ENCODE measurements at regions of chr20 and their contacts with region 1.

Region 1: DNA sequence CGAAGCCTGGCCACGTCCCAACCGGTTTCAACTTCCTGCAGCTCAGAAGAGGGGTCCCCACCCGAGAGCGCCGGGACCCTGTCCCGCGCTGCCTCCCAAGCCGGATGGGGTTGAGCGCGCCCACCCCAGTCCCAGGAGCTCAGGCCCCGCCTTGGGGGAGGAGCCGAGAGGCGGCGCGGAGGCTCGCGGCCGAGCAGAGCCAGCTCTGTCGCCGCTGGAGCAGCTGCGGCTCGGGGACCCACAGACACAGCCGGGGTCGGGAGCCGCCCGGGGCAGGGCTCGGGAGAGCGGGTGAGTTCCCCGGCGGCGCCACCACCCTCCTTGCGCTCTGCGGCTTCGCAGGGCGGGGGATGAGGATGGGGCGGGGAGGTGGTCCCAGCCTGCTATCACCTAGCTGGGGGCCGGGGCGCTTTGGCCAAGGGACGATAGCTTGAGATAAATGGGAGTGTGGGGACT is at the start of gene PPP1R16B:
- DNase-seq: peak; percentile 89
- H3K4me3 Mint-ChIP-seq: peak within 1 kb of the TSS; percentile 87
- H3K27ac Mint-ChIP-seq: peak within 1 kb of the TSS; percentile 99
- H3K4me1 Mint-ChIP-seq: peaks cover 69% of the 10 kb centered on the region
- H3K27me3 Mint-ChIP-seq: peaks cover 4% of the 10 kb centered on the region

Region 2: DNA sequence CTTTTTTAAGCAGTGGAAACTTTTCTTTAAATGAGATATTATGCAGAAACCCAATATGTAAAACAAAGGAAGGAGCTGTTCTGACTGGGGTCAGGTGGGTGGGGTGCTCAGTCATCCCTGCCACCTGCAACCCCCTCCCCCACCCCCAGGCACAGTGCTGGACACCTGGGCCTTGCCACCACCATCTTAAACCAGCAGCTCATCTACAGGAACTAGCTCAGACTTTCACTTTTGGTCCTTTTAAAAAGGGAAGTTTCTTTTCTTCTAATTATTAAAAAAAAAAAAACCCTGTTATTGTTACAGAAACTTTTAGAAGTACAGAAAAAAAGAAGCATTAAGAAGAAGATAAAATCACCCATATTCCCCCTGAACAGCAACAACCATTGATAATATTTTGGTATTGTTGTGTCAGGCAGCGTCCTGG is 37.0 kb after region 1 on chr20:
- CTCF ChIA-PET with region 1: interaction called, 13 read pairs
- DNase-seq: peak; percentile 62
- H3K4me3 Mint-ChIP-seq: no peak overlapping the region
- H3K27ac Mint-ChIP-seq: peak overlapping the region; percentile 90
- H3K4me1 Mint-ChIP-seq: peaks cover 73% of the 10 kb centered on the region
- H3K27me3 Mint-ChIP-seq: no peaks in the 10 kb centered on the region

Region 3: DNA sequence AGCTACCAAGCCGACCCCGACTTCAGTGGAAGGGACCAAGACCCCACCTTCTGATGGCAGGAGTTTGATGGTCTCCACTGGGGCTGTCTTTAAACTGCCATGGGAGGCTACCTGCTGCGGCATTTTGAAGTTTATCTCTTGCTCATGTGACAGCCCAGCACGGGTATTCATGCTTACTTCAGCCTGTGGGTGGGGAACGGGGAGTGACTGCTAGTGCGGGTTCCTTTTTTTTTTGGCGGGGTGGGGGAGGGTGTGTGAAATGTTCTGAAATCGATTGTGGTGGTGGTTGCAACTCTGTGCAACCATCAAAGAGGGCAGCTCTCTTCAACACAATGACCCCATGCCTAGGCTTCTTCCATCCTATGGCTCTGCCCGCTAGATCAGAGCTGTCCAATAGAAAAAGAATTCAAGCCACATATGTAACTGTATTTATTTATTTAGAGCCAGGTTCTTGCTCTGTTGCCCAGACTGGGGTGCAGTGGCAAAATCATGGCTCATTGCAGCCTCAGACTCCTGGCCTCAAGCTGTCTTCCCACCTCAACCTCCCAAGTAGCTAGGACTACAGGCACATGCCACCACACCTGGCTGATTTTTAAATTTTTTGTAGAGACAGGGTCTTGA is 53.6 kb after region 1 on chr20:
- CTCF ChIA-PET with region 1: interaction called, 10 read pairs
- DNase-seq: peak; percentile 29
- H3K4me3 Mint-ChIP-seq: no peak overlapping the region
- H3K27ac Mint-ChIP-seq: peak overlapping the region; percentile 78
- H3K4me1 Mint-ChIP-seq: peaks cover 84% of the 10 kb centered on the region
- H3K27me3 Mint-ChIP-seq: no peaks in the 10 kb centered on the region

Region 4: DNA sequence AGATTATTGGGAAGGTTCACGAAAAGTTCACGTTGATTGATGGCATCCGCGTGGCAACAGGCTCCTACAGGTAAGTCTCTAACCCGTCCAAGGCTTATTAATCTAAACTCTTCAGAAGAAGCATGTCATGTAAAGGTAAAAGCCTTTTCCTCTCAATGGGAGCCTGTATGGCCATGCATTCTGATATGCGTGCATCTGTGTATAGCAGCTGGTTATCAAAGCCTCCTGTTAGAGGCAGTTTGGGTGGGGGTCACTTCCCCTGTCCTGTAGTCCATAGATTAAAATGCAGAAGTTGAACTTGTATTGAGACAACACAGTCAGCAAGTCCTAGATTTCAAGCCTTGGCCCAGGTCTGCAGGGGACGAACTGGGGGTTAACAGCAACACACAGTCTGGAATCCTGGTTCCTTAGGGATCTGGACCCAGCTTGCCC is 142.4 kb after region 1 on chr20:
- CTCF ChIA-PET with region 1: no interaction called
- DNase-seq: no peak
- H3K4me3 Mint-ChIP-seq: no peak overlapping the region
- H3K27ac Mint-ChIP-seq: no peak overlapping the region
- H3K4me1 Mint-ChIP-seq: no peaks in the 10 kb centered on the region
- H3K27me3 Mint-ChIP-seq: no peaks in the 10 kb centered on the region

Region 5: GRCh38 chr20:39112178-39112743 is 306.7 kb after region 1 on chr20:
- CTCF ChIA-PET with region 1: no interaction called
- DNase-seq: peak; percentile 25
- H3K4me3 Mint-ChIP-seq: no peak overlapping the region
- H3K27ac Mint-ChIP-seq: no peak overlapping the region
- H3K4me1 Mint-ChIP-seq: no peaks in the 10 kb centered on the region
- H3K27me3 Mint-ChIP-seq: peaks cover 52% of the 10 kb centered on the region